B cell (primary cell): ENCODE measurements at regions of chr12 and their contacts with region 1.

Region 1: GRCh38 chr12:62603061-62603810 is 136.6 kb downstream of the MON2 start:
- DNase-seq: peak; percentile 92
- ATAC-seq: peak; percentile 67
- H3K4me3 ChIP-seq: peak overlapping the region; percentile 81 to 89 (median 82)
- H3K4me3 Mint-ChIP-seq: peak overlapping the region; percentile 94
- H3K27ac ChIP-seq: peak overlapping the region; percentile 99 to 100
- H3K27ac Mint-ChIP-seq: peak overlapping the region; percentile 100
- H3K4me1 ChIP-seq: peaks cover 17 to 22% of the 10 kb centered on the region in 2 donors
- H3K4me1 Mint-ChIP-seq: peaks cover 40% of the 10 kb centered on the region
- H3K27me3 ChIP-seq: no peaks in the 10 kb centered on the region
- H3K27me3 Mint-ChIP-seq: no peaks in the 10 kb centered on the region
- CTCF ChIP-seq: peak; percentile 49

Region 2: GRCh38 chr12:62259993-62260732 is 343.1 kb before region 1 on chr12 and contains the start of gene USP15:
- CTCF ChIA-PET with region 1: interaction called, 4 read pairs
- POLR2A ChIA-PET with region 1: interaction called, 11 read pairs
- intact Hi-C with region 1: loop called (anchors 1 kb)
- DNase-seq: peak; percentile 98
- ATAC-seq: peak; percentile 82
- H3K4me3 ChIP-seq: peak within 1 kb of the TSS; percentile 81 to 99 (median 97)
- H3K4me3 Mint-ChIP-seq: peak within 1 kb of the TSS; percentile 96
- H3K27ac ChIP-seq: peak within 1 kb of the TSS; percentile 96
- H3K27ac Mint-ChIP-seq: peak within 1 kb of the TSS; percentile 98
- H3K4me1 ChIP-seq: peaks cover 34 to 44% of the 10 kb centered on the region in 2 donors
- H3K4me1 Mint-ChIP-seq: peaks cover 50% of the 10 kb centered on the region
- H3K27me3 ChIP-seq: no peaks in the 10 kb centered on the region
- H3K27me3 Mint-ChIP-seq: no peaks in the 10 kb centered on the region
- CTCF ChIP-seq: peak; percentile 61
- total RNA-seq, gene USP15: 171 and 182 TPM in 2 replicates

Region 3: DNA sequence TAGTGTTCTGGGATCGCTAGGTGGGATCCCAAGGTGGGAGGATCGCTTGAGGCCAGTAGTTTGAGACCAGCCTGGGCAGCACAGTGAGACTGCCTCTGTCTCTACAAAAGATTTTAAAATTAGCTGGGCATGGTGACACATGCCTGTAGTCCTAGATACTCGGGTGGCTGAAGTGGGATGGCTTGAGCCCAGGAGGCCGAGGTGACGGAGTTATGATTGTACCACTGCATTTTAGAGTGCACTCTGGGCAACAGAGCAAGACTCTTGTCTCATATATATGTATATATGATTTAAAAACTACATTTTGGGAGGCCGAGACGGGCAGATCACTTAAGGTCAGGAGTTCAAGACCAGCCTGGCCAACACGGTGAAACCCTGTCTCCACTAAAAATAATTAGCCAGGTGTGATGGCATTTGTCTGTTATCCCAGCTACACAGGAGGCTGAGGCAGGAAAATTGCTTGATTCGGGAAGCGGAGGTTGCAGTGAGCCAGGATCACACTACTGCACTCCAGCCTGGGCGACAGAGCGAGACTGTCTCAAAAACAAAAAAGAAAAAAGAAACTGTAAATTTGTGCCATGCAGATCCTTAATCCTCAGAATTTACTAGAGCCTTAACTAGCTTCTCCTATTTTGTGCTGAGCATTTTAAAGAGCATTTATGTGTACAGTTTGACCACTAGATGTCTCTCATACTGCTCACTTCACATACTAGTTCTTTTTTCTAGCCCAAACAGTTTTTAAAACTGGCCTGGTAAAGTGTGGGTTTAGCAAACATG is 21.8 kb before region 1 on chr12:
- CTCF ChIA-PET with region 1: interaction called, 6 read pairs
- POLR2A ChIA-PET with region 1: interaction called, 6 read pairs
- intact Hi-C with region 1: loop called (anchors 2 kb)
- DNase-seq: peak; percentile 63
- ATAC-seq: peak; percentile 33
- H3K4me3 ChIP-seq: no peak overlapping the region
- H3K4me3 Mint-ChIP-seq: no peak overlapping the region
- H3K27ac ChIP-seq: no peak overlapping the region
- H3K27ac Mint-ChIP-seq: no peak overlapping the region
- H3K4me1 ChIP-seq: no peaks in the 10 kb centered on the region
- H3K4me1 Mint-ChIP-seq: no peaks in the 10 kb centered on the region
- H3K27me3 ChIP-seq: no peaks in the 10 kb centered on the region
- H3K27me3 Mint-ChIP-seq: no peaks in the 10 kb centered on the region
- CTCF ChIP-seq: peak; percentile 82

Region 4: GRCh38 chr12:62793256-62794217 is 190.3 kb after region 1 on chr12:
- CTCF ChIA-PET with region 1: interaction called, 22 read pairs
- POLR2A ChIA-PET with region 1: interaction called, 3 read pairs
- intact Hi-C with region 1: no loop called
- DNase-seq: peak; percentile 80
- ATAC-seq: peak; percentile 70
- H3K4me3 ChIP-seq: no peak overlapping the region
- H3K4me3 Mint-ChIP-seq: no peak overlapping the region
- H3K27ac ChIP-seq: no peak overlapping the region
- H3K27ac Mint-ChIP-seq: no peak overlapping the region
- H3K4me1 ChIP-seq: no peaks in the 10 kb centered on the region
- H3K4me1 Mint-ChIP-seq: no peaks in the 10 kb centered on the region
- H3K27me3 ChIP-seq: no peaks in the 10 kb centered on the region
- H3K27me3 Mint-ChIP-seq: no peaks in the 10 kb centered on the region
- CTCF ChIP-seq: peak; percentile 97

Region 5: GRCh38 chr12:63779498-63780481 is 1176.6 kb after region 1 on chr12 and contains the start of gene RXYLT1:
- CTCF ChIA-PET with region 1: no interaction called
- POLR2A ChIA-PET with region 1: no interaction called
- intact Hi-C with region 1: loop called (anchors 5 kb)
- DNase-seq: peak; percentile 92
- ATAC-seq: peak; percentile 93
- H3K4me3 ChIP-seq: peak within 1 kb of the TSS; percentile 76 to 90 (median 85)
- H3K4me3 Mint-ChIP-seq: peak within 1 kb of the TSS; percentile 98
- H3K27ac ChIP-seq: peak within 1 kb of the TSS; percentile 77 to 91
- H3K27ac Mint-ChIP-seq: peak within 1 kb of the TSS; percentile 95
- H3K4me1 ChIP-seq: peaks cover 6 to 8% of the 10 kb centered on the region in 2 donors
- H3K4me1 Mint-ChIP-seq: peaks cover 16% of the 10 kb centered on the region
- H3K27me3 ChIP-seq: no peaks in the 10 kb centered on the region
- H3K27me3 Mint-ChIP-seq: no peaks in the 10 kb centered on the region
- CTCF ChIP-seq: no peak
- total RNA-seq, gene RXYLT1: 16.2 and 16.5 TPM in 2 replicates

Region 6: GRCh38 chr12:64403707-64404469 is 1800.7 kb after region 1 on chr12 and contains the start of gene XPOT:
- CTCF ChIA-PET with region 1: no interaction called
- POLR2A ChIA-PET with region 1: no interaction called
- intact Hi-C with region 1: loop called (anchors 10 kb)
- DNase-seq: peak; percentile 96
- ATAC-seq: peak; percentile 93
- H3K4me3 ChIP-seq: peak within 1 kb of the TSS; percentile 56 to 97 (median 91)
- H3K4me3 Mint-ChIP-seq: peak within 1 kb of the TSS; percentile 98
- H3K27ac ChIP-seq: peak within 1 kb of the TSS; percentile 71 to 80
- H3K27ac Mint-ChIP-seq: peak within 1 kb of the TSS; percentile 97
- H3K4me1 ChIP-seq: peaks cover 5 to 12% of the 10 kb centered on the region in 2 donors
- H3K4me1 Mint-ChIP-seq: peaks cover 15% of the 10 kb centered on the region
- H3K27me3 ChIP-seq: no peaks in the 10 kb centered on the region
- H3K27me3 Mint-ChIP-seq: no peaks in the 10 kb centered on the region
- CTCF ChIP-seq: no peak
- total RNA-seq, gene XPOT: 48.8 and 56.1 TPM in 2 replicates